Naive thymus-derived CD4-positive, alpha-beta T cell (primary cell): ENCODE measurements at regions of chr13 and their contacts with region 1.

Region 1: GRCh38 chr13:111216166-111216960 is 101.3 kb downstream of the ARHGEF7 start:
- DNase-seq: peak in 8 of 9 donors; percentile 18 to 49 (median 30)
- ATAC-seq: peak; percentile 72
- H3K4me3 ChIP-seq: no peak overlapping the region
- H3K4me3 Mint-ChIP-seq: no peak overlapping the region
- H3K27ac ChIP-seq: no peak overlapping the region
- H3K27ac Mint-ChIP-seq: peak overlapping the region in 6 of 9 donors; percentile 34 to 88 (median 50)
- H3K4me1 ChIP-seq: no peaks in the 10 kb centered on the region
- H3K4me1 Mint-ChIP-seq: peaks cover 14 to 73% (median 57%) of the 10 kb centered on the region in 7 donors
- H3K27me3 ChIP-seq: no peaks in the 10 kb centered on the region
- H3K27me3 Mint-ChIP-seq: no peaks in the 10 kb centered on the region

Region 2: GRCh38 chr13:110944121-110944967 is 272.0 kb before region 1 on chr13:
- CTCF ChIA-PET with region 1: no interaction called
- POLR2A ChIA-PET with region 1: no interaction called
- intact Hi-C with region 1: loop called in 1 of 2 experiments (anchors 10 kb)
- DNase-seq: peak in 3 of 9 donors; percentile 3 to 37 (median 10)
- ATAC-seq: peak; percentile 33
- H3K4me3 ChIP-seq: no peak overlapping the region
- H3K4me3 Mint-ChIP-seq: no peak overlapping the region
- H3K27ac ChIP-seq: no peak overlapping the region
- H3K27ac Mint-ChIP-seq: no peak overlapping the region
- H3K4me1 ChIP-seq: no peaks in the 10 kb centered on the region
- H3K4me1 Mint-ChIP-seq: peaks cover 0 to 22% (median 0%) of the 10 kb centered on the region in 7 donors
- H3K27me3 ChIP-seq: no peaks in the 10 kb centered on the region
- H3K27me3 Mint-ChIP-seq: peaks cover 0 to 3% (median 0%) of the 10 kb centered on the region in 5 donors

Region 3: DNA sequence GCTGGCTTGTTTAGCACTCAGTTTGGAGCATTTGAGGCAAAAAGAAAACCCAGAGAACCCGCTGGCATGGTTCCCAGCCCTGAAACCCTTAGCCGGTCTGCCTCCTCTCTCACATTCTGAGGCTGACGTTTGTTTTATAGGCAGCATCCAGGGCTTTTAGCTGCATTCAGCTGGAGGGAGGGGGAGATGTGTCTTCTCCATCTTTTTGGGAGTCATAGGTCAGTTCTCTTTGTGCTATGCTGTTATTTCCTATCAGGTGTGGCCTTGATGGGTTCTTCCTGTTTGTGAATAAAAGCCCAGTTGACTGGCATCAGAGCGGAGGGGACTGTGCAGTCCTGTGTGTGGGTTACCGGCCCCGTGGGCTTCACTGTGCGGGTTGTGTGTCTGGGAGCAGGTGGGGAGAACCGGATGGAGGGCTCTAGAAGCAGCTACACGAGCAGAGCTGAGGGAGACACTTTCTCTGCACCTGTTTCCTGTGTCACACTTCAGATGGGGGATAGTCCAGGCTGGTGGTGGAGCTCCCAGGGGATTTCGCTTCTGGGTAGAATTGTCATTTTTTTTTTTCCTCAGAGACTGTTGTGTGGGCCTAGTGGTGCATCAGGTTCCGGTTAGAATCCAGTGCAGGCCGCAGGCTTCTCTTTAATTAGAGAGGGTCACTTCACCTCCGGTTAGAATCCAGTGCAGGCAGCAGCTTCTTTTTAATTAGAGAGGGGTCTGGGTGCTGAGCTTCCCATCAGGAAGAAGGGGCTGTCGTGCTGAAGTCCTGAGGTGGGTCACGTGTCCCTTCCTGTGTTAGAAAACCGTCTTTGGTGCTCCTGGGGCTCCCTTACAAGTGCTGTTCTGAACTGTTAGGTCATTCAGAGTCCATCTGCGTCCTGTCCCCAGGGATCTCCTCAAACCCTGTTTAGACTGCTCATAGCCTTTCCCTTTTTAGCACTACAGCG is 31.6 kb before region 1 on chr13:
- CTCF ChIA-PET with region 1: interaction called, 5 read pairs
- POLR2A ChIA-PET with region 1: interaction called, 3 read pairs
- intact Hi-C with region 1: loop called (anchors 1 kb)
- DNase-seq: peak in 7 of 9 donors; percentile 52 to 68 (median 55)
- ATAC-seq: peak; percentile 67
- H3K4me3 ChIP-seq: peak overlapping the region; percentile 22
- H3K4me3 Mint-ChIP-seq: peak overlapping the region; percentile 65 to 88 (median 82)
- H3K27ac ChIP-seq: peak overlapping the region; percentile 62
- H3K27ac Mint-ChIP-seq: peak overlapping the region; percentile 84 to 98 (median 93)
- H3K4me1 ChIP-seq: peaks cover 50 to 92% of the 10 kb centered on the region in 2 donors
- H3K4me1 Mint-ChIP-seq: peaks cover 84 to 100% (median 95%) of the 10 kb centered on the region in 7 donors
- H3K27me3 ChIP-seq: no peaks in the 10 kb centered on the region
- H3K27me3 Mint-ChIP-seq: no peaks in the 10 kb centered on the region

Region 4: DNA sequence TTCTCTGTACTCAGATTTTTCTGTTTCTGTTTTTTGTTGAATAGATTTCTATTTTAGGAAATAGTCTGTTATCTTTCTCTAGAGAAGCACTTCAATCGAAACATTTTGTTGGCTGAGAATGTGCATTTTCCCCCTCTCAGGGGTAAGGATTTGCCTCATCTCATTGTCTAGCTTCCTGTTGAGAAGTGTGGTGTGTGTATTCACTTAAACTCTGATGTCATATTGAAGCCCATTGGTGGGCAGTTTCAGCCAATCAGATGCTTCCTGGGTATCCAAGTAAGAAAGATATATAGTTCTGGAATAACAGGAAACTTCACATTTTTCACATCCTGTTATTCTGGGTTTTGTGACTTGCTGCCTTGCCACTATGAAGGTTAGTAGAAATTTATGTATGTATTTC is 13.6 kb before region 1 on chr13:
- CTCF ChIA-PET with region 1: interaction called, 7 read pairs
- POLR2A ChIA-PET with region 1: interaction called, 3 read pairs
- intact Hi-C with region 1: loop called in 1 of 2 experiments (anchors 1 kb)
- DNase-seq: peak in 7 of 9 donors; percentile 51 to 72 (median 65)
- ATAC-seq: peak; percentile 85
- H3K4me3 ChIP-seq: no peak overlapping the region
- H3K4me3 Mint-ChIP-seq: peak overlapping the region in 9 of 10 donors; percentile 15 to 68 (median 48)
- H3K27ac ChIP-seq: peak overlapping the region; percentile 32
- H3K27ac Mint-ChIP-seq: peak overlapping the region; percentile 52 to 91 (median 85)
- H3K4me1 ChIP-seq: peaks cover 4 to 38% of the 10 kb centered on the region in 2 donors
- H3K4me1 Mint-ChIP-seq: peaks cover 56 to 89% (median 81%) of the 10 kb centered on the region in 7 donors
- H3K27me3 ChIP-seq: no peaks in the 10 kb centered on the region
- H3K27me3 Mint-ChIP-seq: no peaks in the 10 kb centered on the region

Region 5: DNA sequence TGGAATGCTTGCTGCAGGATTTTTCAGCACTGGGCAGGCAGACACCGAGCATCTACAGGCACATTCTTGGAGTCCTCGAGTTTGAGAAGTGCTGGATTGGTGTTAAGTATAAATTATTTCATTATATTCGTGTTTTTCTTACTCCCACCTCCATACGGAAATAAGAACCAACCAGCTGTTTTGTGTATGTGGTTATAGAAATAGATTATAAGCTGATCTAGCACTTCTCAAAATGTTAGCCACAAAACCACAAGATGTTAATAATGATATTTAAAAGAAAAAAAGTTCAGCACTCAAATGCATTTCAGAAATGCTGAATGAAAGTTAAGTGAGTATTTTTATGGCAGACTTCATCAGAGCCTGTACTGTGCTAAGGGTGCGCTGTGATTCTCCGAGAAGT is 80.1 kb after region 1 on chr13:
- CTCF ChIA-PET with region 1: no interaction called
- POLR2A ChIA-PET with region 1: no interaction called
- intact Hi-C with region 1: no loop called
- DNase-seq: no peak
- ATAC-seq: no peak
- H3K4me3 ChIP-seq: no peak overlapping the region
- H3K4me3 Mint-ChIP-seq: no peak overlapping the region
- H3K27ac ChIP-seq: no peak overlapping the region
- H3K27ac Mint-ChIP-seq: no peak overlapping the region
- H3K4me1 ChIP-seq: peaks cover 7 to 14% of the 10 kb centered on the region in 2 donors
- H3K4me1 Mint-ChIP-seq: peaks cover 0 to 15% (median 10%) of the 10 kb centered on the region in 7 donors
- H3K27me3 ChIP-seq: no peaks in the 10 kb centered on the region
- H3K27me3 Mint-ChIP-seq: no peaks in the 10 kb centered on the region